CD4-positive, alpha-beta memory T cell (primary cell): ENCODE measurements at regions of chr10 and their contacts with region 1.

Region 1: DNA sequence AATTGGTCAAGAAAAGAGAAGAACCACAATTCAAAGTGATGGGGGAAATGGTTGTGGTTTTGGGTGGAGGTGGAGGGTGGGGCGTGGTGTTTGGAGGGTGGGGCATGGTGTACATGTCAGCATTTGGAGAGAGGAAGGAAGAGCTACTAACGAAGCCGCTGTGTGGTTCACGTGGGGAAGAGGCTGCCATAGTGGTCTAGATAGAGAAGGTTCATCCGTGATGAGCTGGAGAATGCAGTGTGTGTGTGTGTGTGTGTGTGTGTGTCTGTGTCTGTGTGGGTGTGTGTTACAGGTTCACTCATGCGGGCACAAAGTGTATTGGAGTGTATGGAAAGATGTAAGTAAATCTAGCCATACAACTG is 6.1 kb upstream of the VCL start:
- DNase-seq: peak; percentile 82 to 90 (median 88)
- H3K4me3 ChIP-seq: no peak overlapping the region
- H3K4me3 Mint-ChIP-seq: peak overlapping the region; percentile 36 to 89 (median 60)
- H3K27ac ChIP-seq: peak overlapping the region; percentile 7
- H3K27ac Mint-ChIP-seq: peak overlapping the region; percentile 70 to 97 (median 93)
- H3K4me1 ChIP-seq: peaks cover 34% of the 10 kb centered on the region
- H3K4me1 Mint-ChIP-seq: peaks cover 23 to 62% (median 43%) of the 10 kb centered on the region in 4 donors
- H3K27me3 ChIP-seq: no peaks in the 10 kb centered on the region
- H3K27me3 Mint-ChIP-seq: no peaks in the 10 kb centered on the region

Region 2: GRCh38 chr10:73974309-73974946 is 17.4 kb before region 1 on chr10:
- CTCF ChIA-PET with region 1: interaction called, 4 read pairs
- POLR2A ChIA-PET with region 1: interaction called, 19 read pairs
- intact Hi-C with region 1: no loop called
- DNase-seq: peak in 4 of 5 donors; percentile 43 to 60 (median 48)
- H3K4me3 ChIP-seq: no peak overlapping the region
- H3K4me3 Mint-ChIP-seq: peak overlapping the region; percentile 21 to 70 (median 56)
- H3K27ac ChIP-seq: no peak overlapping the region
- H3K27ac Mint-ChIP-seq: peak overlapping the region; percentile 1 to 75 (median 37)
- H3K4me1 ChIP-seq: peaks cover 24% of the 10 kb centered on the region
- H3K4me1 Mint-ChIP-seq: peaks cover 15 to 37% (median 22%) of the 10 kb centered on the region in 4 donors
- H3K27me3 ChIP-seq: no peaks in the 10 kb centered on the region
- H3K27me3 Mint-ChIP-seq: no peaks in the 10 kb centered on the region